MCF 10A (cell line): ENCODE measurements at regions of chr5 and their contacts with region 1.

Region 1: GRCh38 chr5:160508780-160509361 is 87.2 kb downstream of the PTTG1 start:
- DNase-seq: peak; percentile 86
- H3K4me3 Mint-ChIP-seq: no peak overlapping the region
- H3K27ac Mint-ChIP-seq: no peak overlapping the region
- H3K4me1 Mint-ChIP-seq: peaks cover 5% of the 10 kb centered on the region
- H3K27me3 Mint-ChIP-seq: peaks cover 21% of the 10 kb centered on the region
- CTCF ChIP-seq: peak; percentile 96

Region 2: GRCh38 chr5:160240350-160240749 is 268.5 kb before region 1 on chr5:
- CTCF ChIA-PET with region 1: no interaction called
- POLR2A ChIA-PET with region 1: no interaction called
- intact Hi-C with region 1: no loop called
- DNase-seq: no peak
- H3K4me3 Mint-ChIP-seq: no peak overlapping the region
- H3K27ac Mint-ChIP-seq: no peak overlapping the region
- H3K4me1 Mint-ChIP-seq: no peaks in the 10 kb centered on the region
- H3K27me3 Mint-ChIP-seq: peaks cover 18% of the 10 kb centered on the region
- CTCF ChIP-seq: no peak

Region 3: GRCh38 chr5:160497878-160498277 is 11.0 kb before region 1 on chr5:
- CTCF ChIA-PET with region 1: interaction called, 15 read pairs
- POLR2A ChIA-PET with region 1: no interaction called
- intact Hi-C with region 1: no loop called
- DNase-seq: no peak
- H3K4me3 Mint-ChIP-seq: no peak overlapping the region
- H3K27ac Mint-ChIP-seq: no peak overlapping the region
- H3K4me1 Mint-ChIP-seq: no peaks in the 10 kb centered on the region
- H3K27me3 Mint-ChIP-seq: peaks cover 24% of the 10 kb centered on the region
- CTCF ChIP-seq: no peak

Region 4: GRCh38 chr5:160685695-160686094 is 176.8 kb after region 1 on chr5:
- CTCF ChIA-PET with region 1: no interaction called
- POLR2A ChIA-PET with region 1: no interaction called
- intact Hi-C with region 1: loop called (anchors 10 kb)
- DNase-seq: peak; percentile 37
- H3K4me3 Mint-ChIP-seq: no peak overlapping the region
- H3K27ac Mint-ChIP-seq: no peak overlapping the region
- H3K4me1 Mint-ChIP-seq: no peaks in the 10 kb centered on the region
- H3K27me3 Mint-ChIP-seq: no peaks in the 10 kb centered on the region
- CTCF ChIP-seq: peak; percentile 40

Region 5: DNA sequence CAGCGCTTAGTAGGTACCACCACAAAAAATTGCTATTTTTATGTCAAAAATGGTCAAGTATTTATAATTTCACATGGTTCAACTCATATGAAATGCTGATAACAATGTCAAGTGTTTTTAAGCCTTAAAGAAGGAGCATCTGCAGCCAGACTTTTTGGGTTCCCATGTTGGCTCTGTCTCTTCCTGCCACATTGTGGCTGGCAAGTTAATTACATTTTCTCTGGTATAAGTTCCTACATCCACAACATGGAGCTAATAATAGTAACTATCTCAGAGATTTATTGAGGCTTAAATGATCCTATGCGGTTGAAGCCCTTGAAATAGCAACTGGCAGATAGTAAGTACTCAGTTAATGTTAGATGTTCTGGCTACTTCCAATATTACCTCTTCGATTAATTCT is 337.8 kb after region 1 on chr5:
- CTCF ChIA-PET with region 1: interaction called, 5 read pairs
- POLR2A ChIA-PET with region 1: no interaction called
- intact Hi-C with region 1: loop called (anchors 1 kb)
- DNase-seq: no peak
- H3K4me3 Mint-ChIP-seq: no peak overlapping the region
- H3K27ac Mint-ChIP-seq: no peak overlapping the region
- H3K4me1 Mint-ChIP-seq: no peaks in the 10 kb centered on the region
- H3K27me3 Mint-ChIP-seq: no peaks in the 10 kb centered on the region
- CTCF ChIP-seq: no peak

Region 6: GRCh38 chr5:161676103-161676502 is 1167.2 kb after region 1 on chr5:
- CTCF ChIA-PET with region 1: interaction called, 4 read pairs
- POLR2A ChIA-PET with region 1: no interaction called
- intact Hi-C with region 1: loop called (anchors 5 kb)
- DNase-seq: peak; percentile 54
- H3K4me3 Mint-ChIP-seq: no peak overlapping the region
- H3K27ac Mint-ChIP-seq: no peak overlapping the region
- H3K4me1 Mint-ChIP-seq: no peaks in the 10 kb centered on the region
- H3K27me3 Mint-ChIP-seq: peaks cover 29% of the 10 kb centered on the region
- CTCF ChIP-seq: peak; percentile 73

Region 7: GRCh38 chr5:161960314-161960713 is 1451.4 kb after region 1 on chr5:
- CTCF ChIA-PET with region 1: no interaction called
- POLR2A ChIA-PET with region 1: no interaction called
- intact Hi-C with region 1: loop called (anchors 5 kb)
- DNase-seq: no peak
- H3K4me3 Mint-ChIP-seq: no peak overlapping the region
- H3K27ac Mint-ChIP-seq: no peak overlapping the region
- H3K4me1 Mint-ChIP-seq: no peaks in the 10 kb centered on the region
- H3K27me3 Mint-ChIP-seq: peaks cover 100% of the 10 kb centered on the region
- CTCF ChIP-seq: no peak